ENCODE measurements at regions of chr2 and their contacts with region 1.

Region 1: DNA sequence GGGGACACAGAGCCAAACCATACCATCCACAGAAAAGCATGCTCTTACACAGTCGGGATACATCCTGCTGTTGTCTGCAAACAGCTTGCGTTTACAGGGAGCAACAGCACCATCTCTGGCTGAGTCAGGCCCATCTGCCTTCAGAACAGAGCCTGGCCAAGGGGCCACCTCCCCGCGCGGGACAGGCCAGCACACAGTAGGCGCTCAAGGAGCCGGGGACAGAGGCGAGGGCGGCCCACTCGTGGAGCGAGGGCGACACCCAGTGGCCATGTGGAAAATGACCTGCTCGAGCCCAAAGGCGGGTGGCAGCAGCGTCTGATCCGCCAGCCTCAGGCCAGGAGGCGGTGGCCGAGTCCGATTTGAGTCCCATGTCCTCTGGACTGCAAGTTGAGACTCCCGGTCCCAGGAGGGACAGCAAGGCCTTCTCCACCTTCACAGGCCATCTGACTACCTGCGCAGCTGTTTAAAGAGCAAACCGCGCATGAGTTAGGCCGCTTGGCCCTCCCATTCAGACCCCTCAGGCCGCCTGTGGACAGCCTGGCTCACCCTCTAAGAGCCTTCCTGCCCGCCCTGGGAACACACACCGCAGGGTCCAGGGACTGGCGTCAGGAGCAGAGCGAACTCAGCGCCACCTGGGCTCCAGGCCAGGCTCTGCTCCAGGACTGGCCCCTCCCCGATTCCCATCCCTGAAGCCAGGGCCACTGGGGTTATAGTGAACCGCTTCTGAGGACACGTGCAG is 38.3 kb downstream of the TTC32 start:
- DNase-seq: peak; percentile 86
- ATAC-seq: peak; percentile 91

Region 2: GRCh38 chr2:18387441-18388206 is 1475.8 kb before region 1 on chr2:
- intact Hi-C with region 1: loop called (anchors 10 kb)
- DNase-seq: peak; percentile 74
- ATAC-seq: peak; percentile 97

Region 3: DNA sequence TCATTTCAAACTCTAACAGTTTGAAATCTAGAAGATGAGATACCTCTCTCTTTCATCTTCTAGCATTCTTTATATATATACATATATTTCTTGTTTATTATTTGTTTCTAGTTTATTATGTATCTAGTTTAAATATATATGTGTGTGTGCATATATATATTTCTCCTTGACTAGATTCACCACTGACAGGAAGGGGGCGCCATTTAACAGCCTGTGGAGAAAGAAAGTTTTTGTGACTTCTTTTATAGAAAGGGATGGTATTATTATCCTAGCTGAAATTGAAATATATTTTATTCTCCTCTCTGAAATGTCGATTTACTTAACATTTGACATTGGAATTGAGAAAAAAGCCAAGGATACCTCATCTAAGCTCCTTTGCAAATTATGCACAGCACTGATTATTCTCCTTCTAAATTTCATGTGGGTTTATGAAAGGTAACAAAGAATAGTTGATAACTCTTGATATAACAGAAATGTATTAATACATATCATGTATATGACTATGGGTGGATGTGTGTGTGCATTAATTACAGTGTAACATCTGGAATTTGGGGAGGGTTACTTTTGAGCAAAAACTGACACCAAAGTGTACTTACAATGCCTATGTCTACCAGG is 1113.5 kb before region 1 on chr2:
- intact Hi-C with region 1: loop called (anchors 10 kb)
- DNase-seq: no peak
- ATAC-seq: peak; percentile 68

Region 4: DNA sequence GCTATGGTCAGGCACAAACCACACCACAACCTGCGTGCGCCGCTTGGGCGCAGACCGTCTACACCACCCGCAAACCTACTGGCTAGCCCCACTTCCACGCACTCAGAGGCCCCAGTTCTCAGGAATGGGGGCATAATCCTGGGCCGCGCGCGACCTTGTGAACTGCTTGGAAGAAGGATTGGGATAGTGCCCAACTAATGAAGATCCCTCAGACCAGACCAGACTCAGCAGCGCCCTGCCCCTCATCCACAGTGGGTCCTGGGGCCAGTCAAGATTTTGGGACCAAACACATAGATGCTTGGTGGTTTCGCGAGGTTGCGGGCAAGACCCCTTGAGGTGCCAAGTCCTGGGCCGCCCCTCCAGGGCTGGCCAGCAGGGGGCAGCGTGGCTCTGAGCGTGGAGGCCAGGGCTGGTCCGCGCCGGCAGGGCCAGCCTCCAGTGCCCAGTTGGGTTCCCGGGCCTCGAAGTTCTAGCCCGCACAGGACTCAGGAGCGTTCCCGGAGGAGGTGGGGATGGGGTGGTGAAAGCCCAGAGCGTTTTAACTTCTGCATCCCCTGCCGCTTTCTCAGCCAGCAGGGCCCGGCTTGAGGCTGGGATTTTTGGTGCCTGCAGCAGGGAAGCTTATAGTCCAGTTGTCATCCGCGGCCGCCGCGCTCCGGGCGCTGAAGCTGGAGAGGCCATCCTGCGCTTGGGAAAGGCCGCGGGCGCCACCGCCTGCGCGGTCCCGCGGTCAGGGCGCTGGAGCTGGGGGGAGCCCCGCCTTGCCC is 513.4 kb before region 1 on chr2:
- intact Hi-C with region 1: loop called (anchors 10 kb)
- DNase-seq: peak; percentile 78
- ATAC-seq: peak; percentile 38

Measured in Right ventricle myocardium superior (tissue), 1 donor.